ENCODE measurements at regions of chr2 and their contacts with region 1.

Region 1: DNA sequence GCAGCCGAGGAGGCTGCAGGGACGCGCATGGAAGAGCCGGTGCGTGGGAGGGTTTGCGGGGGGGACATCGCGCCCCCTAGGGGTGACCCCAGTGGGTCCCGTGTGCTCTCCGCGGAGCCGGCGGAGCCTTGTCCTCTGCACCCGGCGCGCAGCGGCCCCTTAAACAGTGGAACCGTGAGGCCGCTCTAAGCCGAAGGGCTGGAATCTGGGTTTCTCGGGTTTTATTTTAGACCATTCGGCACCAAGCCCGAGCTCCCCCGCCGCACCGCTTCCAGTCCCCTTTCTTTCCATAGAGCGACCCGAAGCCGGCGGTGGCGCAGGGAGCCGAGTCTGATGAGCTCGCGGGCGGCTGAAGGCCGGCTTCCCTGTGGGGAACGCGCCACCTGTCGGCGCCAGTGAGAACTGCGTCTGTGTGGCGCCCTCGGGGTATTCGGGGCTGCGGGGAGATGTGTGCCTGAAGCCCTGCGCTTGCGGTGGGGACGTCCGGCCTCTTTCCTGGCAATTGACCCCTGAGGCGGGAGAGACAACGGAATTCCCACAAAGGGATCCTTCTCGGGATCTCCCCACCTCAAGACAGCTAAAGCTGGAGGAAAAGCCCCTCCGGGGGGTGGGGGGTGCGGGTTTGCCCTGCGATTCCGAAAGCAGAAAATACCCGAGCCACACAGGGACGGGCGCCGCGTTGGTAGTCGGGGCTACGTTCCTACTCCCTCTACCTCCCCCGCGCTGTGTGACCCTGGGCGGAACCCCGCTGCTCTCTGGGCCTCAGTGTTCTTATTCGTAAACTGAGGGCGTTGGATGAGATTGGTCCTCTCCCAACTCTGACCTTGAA is 8.2 kb upstream of the EN1 start:
- DNase-seq: peak; percentile 65 to 86
- H3K4me3 ChIP-seq: no peak overlapping the region
- H3K4me3 Mint-ChIP-seq: no peak overlapping the region
- H3K27ac Mint-ChIP-seq: no peak overlapping the region
- H3K4me1 ChIP-seq: no peaks in the 10 kb centered on the region
- H3K4me1 Mint-ChIP-seq: no peaks in the 10 kb centered on the region
- H3K27me3 ChIP-seq: no peaks in the 10 kb centered on the region; the same call in 1 of the 2 replicates
- H3K27me3 Mint-ChIP-seq: peaks cover 41% of the 10 kb centered on the region
- CTCF ChIP-seq: peak; percentile 74 to 94

Region 2: DNA sequence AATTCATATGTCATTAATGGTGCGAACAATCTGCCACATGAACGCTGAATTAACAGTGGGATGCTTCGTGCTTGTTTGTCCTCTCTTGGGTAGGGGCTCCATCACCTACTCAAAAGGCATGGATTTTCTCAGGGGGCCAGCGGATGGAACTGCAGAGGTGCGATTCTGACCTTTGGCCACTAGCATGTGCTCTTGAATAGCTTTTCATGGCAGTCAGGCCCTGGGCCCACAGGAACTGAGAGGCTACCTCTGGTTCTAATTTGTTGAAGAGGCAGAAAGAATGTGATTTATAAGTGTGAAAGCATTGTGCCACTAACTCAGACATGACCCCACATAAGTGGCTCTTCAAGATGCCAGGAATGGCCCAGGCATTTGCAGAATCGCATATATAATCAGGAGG is 484.1 kb before region 1 on chr2:
- CTCF ChIA-PET with region 1: interaction called, 6 read pairs
- POLR2A ChIA-PET with region 1: no interaction called
- intact Hi-C with region 1: loop called (anchors 1 kb)
- DNase-seq: peak; percentile 43 to 48
- H3K4me3 ChIP-seq: no peak overlapping the region
- H3K4me3 Mint-ChIP-seq: no peak overlapping the region
- H3K27ac Mint-ChIP-seq: no peak overlapping the region
- H3K4me1 ChIP-seq: no peaks in the 10 kb centered on the region
- H3K4me1 Mint-ChIP-seq: no peaks in the 10 kb centered on the region
- H3K27me3 ChIP-seq: no peaks in the 10 kb centered on the region; the same call in 1 of the 2 replicates
- H3K27me3 Mint-ChIP-seq: peaks cover 12% of the 10 kb centered on the region
- CTCF ChIP-seq: peak; percentile 77 to 90

Region 3: GRCh38 chr2:118477111-118477862 is 378.4 kb before region 1 on chr2:
- CTCF ChIA-PET with region 1: no interaction called
- POLR2A ChIA-PET with region 1: no interaction called
- intact Hi-C with region 1: loop called (anchors 5 kb)
- DNase-seq: peak; percentile 86 to 87
- H3K4me3 ChIP-seq: no peak overlapping the region
- H3K4me3 Mint-ChIP-seq: no peak overlapping the region
- H3K27ac Mint-ChIP-seq: no peak overlapping the region
- H3K4me1 ChIP-seq: peaks cover 12% of the 10 kb centered on the region
- H3K4me1 Mint-ChIP-seq: peaks cover 12% of the 10 kb centered on the region
- H3K27me3 ChIP-seq: peaks cover 8% of the 10 kb centered on the region
- H3K27me3 Mint-ChIP-seq: peaks cover 23% of the 10 kb centered on the region
- CTCF ChIP-seq: no peak

Region 4: GRCh38 chr2:118554616-118555015 is 301.0 kb before region 1 on chr2:
- CTCF ChIA-PET with region 1: interaction called, 9 read pairs
- POLR2A ChIA-PET with region 1: no interaction called
- intact Hi-C with region 1: loop called (anchors 5 kb)
- DNase-seq: no peak
- H3K4me3 ChIP-seq: no peak overlapping the region
- H3K4me3 Mint-ChIP-seq: no peak overlapping the region
- H3K27ac Mint-ChIP-seq: no peak overlapping the region
- H3K4me1 ChIP-seq: no peaks in the 10 kb centered on the region
- H3K4me1 Mint-ChIP-seq: no peaks in the 10 kb centered on the region
- H3K27me3 ChIP-seq: no peaks in the 10 kb centered on the region
- H3K27me3 Mint-ChIP-seq: peaks cover 19% of the 10 kb centered on the region
- CTCF ChIP-seq: peak in 1 of 2 experiments; percentile 46

Measured in Caco-2 (cell line).